ENCODE measurements at regions of chr17 and their contacts with region 1.

Region 1: DNA sequence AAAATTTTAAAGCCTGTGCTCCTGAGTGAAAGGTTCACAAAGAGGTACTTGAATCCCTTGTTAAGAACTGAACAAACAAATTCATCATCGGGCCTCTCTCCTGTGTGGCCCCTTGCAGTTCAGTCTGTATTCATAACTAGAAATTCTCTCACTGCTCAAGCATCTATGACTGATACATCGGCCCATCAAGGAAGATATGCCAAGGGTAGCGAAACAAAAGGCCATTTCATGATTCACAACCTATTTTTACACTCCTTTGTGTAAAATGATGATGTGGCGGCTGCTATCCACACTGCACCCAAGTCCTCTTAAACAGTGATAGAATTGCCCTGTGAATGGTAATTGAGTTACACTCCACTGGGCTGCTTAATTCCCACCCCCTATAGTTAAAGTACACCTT is 204.6 kb downstream of the STX8 start:
- DNase-seq: peak in 1 of 2 donors; percentile 28
- ATAC-seq: peak; percentile 90 to 95
- H3K4me3 ChIP-seq: no peak overlapping the region
- H3K27ac ChIP-seq: peak overlapping the region; percentile 26 to 68 (median 62)
- H3K4me1 ChIP-seq: peaks cover 26 to 30% of the 10 kb centered on the region in 2 donors
- H3K27me3 ChIP-seq: no peaks in the 10 kb centered on the region
- CTCF ChIP-seq: no peak
- POLR2A ChIP-seq: no peak

Region 2: DNA sequence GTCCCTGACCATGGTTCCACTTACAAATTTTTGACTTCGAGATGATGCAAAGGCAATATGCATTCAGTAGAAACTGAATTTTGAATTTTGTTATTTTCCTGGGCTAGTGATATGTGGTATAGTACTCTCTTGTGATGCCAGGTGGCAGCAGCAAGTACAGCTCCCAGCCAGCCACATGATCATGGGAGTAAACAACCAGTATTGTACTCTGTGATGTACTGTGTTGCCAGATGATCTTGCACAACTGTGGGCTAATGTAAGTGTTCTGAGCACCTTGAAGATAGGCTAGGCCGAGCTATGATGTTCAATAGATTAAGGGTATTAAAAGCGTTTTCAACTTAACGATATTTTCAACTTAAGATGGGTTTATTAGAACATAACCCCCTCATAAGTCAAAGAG is 46.2 kb before region 1 on chr17:
- in situ Hi-C with region 1: no loop called
- intact Hi-C with region 1: loop called (anchors 5 kb)
- DNase-seq: peak; percentile 52 to 64
- ATAC-seq: peak; percentile 85 to 95
- H3K4me3 ChIP-seq: no peak overlapping the region
- H3K27ac ChIP-seq: peak overlapping the region in 1 of 4 donors; percentile 13
- H3K4me1 ChIP-seq: peaks cover 0 to 17% of the 10 kb centered on the region in 2 donors
- H3K27me3 ChIP-seq: no peaks in the 10 kb centered on the region
- CTCF ChIP-seq: peak in 1 of 5 experiments; percentile 18
- POLR2A ChIP-seq: no peak

Region 3: GRCh38 chr17:9432134-9432885 is 61.3 kb after region 1 on chr17:
- in situ Hi-C with region 1: no loop called
- intact Hi-C with region 1: loop called (anchors 5 kb)
- DNase-seq: no peak
- ATAC-seq: peak; percentile 32 to 79
- H3K4me3 ChIP-seq: no peak overlapping the region
- H3K27ac ChIP-seq: peak overlapping the region; percentile 34 to 75 (median 51)
- H3K4me1 ChIP-seq: peaks cover 31 to 32% of the 10 kb centered on the region in 2 donors
- H3K27me3 ChIP-seq: no peaks in the 10 kb centered on the region
- CTCF ChIP-seq: no peak
- POLR2A ChIP-seq: no peak